ENCODE measurements at regions of chr12 and their contacts with region 1.

Region 1: DNA sequence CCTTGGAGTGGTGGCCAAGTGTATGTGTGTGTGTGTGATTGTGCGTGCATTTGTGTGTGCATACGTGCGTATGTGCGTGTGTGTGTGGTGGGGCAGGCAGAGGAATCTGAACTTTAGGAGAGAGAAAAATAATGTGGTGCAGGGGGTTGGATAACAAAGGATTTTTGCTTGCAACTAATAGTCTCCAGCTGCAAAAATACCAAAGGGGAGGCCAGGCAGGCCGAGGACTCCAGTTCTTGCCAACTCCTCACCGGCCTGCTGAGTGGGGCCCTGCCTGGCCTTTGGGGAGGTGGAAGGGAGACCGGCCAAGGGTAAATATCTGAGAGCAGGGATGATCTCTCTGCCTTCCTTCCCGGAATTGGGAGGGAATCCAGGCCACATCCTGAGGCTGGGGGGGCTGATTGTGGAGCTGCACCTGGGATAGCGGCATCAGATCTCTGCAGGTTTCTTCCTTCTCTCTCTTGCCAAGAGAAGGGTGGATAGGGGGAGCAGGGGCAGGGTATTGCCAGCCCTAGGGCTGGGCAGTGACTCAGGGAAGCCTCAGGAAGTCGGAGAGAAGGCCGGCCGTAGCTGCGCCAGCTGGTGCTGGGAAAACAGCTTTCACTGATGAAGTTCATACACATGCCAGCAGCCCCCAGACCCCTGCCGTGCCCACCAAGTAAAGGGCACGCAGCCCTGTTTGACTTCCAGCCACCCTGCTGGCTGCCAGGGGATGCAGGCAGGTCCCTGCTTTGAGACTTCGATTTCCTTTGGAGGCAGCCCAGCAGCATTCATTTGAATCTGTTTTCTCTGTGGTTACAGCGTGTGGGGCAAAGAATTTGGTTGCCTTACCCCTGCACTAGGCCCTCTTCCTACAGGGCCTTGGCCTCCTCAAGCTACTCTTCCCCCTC is 4.6 kb upstream of the LRP1-AS start:
- DNase-seq: peak in 1 of 2 donors; percentile 86
- ATAC-seq: no peak
- H3K4me3 ChIP-seq: no peak overlapping the region
- H3K27ac ChIP-seq: peak overlapping the region; percentile 54 to 91
- H3K4me1 ChIP-seq: peaks cover 0 to 8% of the 10 kb centered on the region in 2 donors
- H3K27me3 ChIP-seq: no peaks in the 10 kb centered on the region

Region 2: DNA sequence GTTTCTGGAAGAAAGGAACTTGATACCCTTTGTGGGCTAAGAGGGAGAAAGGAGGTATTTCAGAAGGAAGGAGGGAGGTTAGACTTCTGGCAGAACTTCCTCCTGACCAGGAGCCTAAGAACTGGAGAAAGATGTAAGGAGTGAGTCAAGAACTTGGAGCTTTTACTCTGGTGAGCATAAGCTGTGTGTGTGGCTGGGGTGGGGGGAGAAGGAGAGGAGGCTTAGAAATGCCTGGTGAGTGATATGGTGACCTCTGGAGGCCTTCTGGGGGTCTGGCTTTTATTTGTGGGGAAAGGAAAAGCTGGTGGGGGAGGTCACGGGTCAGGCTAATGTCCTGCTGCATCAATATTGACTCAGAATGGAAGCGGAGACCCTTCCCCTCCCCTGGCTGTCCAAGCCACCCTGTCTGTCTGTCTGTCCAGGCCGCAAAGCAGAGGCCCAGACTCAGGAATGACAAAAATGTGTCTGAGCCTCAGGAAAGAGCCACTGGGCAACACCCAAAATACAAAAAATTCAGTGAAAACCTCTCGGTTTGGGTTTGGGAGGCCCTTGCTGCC is 18.9 kb before region 1 on chr12:
- intact Hi-C with region 1: loop called in 1 of 2 experiments (anchors 2 kb)
- DNase-seq: no peak
- ATAC-seq: no peak
- H3K4me3 ChIP-seq: no peak overlapping the region
- H3K27ac ChIP-seq: peak overlapping the region; percentile 20 to 89
- H3K4me1 ChIP-seq: peaks cover 6 to 8% of the 10 kb centered on the region in 2 donors
- H3K27me3 ChIP-seq: no peaks in the 10 kb centered on the region

Region 3: DNA sequence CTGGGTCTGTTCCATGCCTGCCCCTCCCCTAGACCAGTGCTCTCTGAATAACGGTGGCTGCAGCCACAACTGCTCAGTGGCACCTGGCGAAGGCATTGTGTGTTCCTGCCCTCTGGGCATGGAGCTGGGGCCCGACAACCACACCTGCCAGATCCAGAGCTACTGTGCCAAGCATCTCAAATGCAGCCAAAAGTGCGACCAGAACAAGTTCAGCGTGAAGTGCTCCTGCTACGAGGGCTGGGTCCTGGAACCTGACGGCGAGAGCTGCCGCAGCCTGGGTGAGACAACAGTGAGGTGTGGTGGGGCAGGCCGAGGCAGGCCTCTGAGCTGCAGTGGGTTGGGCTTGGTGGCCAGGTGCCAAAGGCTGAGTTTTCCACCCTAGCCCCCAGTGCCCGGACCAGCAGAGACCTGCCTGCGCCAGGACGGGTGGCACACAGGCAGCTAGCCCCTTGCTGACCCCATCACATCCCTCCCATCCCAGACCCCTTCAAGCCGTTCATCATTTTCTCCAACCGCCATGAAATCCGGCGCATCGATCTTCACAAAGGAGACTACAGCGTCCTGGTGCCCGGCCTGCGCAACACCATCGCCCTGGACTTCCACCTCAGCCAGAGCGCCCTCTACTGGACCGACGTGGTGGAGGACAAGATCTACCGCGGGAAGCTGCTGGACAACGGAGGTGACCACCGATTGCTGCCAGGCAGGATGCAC is 23.6 kb after region 1 on chr12:
- intact Hi-C with region 1: loop called in 1 of 2 experiments (anchors 2 kb)
- DNase-seq: peak; percentile 89 to 96
- ATAC-seq: peak; percentile 75
- H3K4me3 ChIP-seq: no peak overlapping the region
- H3K27ac ChIP-seq: peak overlapping the region in 1 of 2 donors; percentile 9
- H3K4me1 ChIP-seq: no peaks in the 10 kb centered on the region
- H3K27me3 ChIP-seq: no peaks in the 10 kb centered on the region